CD4-positive, alpha-beta memory T cell (primary cell): ENCODE measurements at regions of chr6 and their contacts with region 1.

Region 1: DNA sequence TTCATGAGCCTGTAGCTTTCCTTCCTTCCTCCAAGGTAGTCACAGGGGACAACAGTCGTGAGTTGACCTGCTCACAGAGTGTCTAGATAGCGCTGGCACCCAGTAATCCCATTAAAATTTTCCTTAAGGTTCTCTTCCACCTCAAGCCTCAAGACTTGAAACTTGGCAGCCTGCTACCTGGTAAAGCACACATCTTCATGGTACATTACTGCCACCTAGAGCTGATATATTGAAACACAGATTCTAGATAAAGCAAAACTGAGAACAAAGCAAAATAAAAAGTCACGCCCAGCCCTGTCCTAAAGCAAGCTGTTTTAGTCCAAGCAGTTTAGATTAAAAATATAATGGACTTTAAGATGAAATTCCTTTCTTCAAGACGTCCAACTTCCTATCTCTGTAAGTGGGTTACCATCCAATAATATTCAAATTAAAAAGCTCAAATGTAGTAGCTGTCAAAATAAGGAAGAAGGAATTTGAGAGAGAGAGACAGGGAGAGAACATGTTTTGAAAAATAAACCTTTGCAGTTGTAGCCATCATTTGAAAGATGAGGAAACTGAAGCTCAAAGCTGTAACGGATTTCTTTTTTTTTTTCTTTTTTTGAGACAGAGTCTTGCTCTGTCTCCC is 50.7 kb upstream of the CD83 start:
- DNase-seq: peak in 4 of 5 donors; percentile 47 to 52 (median 50)
- H3K4me3 ChIP-seq: no peak overlapping the region
- H3K4me3 Mint-ChIP-seq: no peak overlapping the region
- H3K27ac ChIP-seq: no peak overlapping the region
- H3K27ac Mint-ChIP-seq: no peak overlapping the region
- H3K4me1 ChIP-seq: no peaks in the 10 kb centered on the region
- H3K4me1 Mint-ChIP-seq: peaks cover 0 to 5% (median 2%) of the 10 kb centered on the region in 4 donors
- H3K27me3 ChIP-seq: no peaks in the 10 kb centered on the region
- H3K27me3 Mint-ChIP-seq: peaks cover 10 to 15% of the 10 kb centered on the region in 2 donors

Region 2: GRCh38 chr6:13795041-13795750 is 271.7 kb before region 1 on chr6:
- CTCF ChIA-PET with region 1: interaction called, 44 read pairs
- POLR2A ChIA-PET with region 1: no interaction called
- intact Hi-C with region 1: loop called (anchors 1 kb)
- DNase-seq: peak; percentile 73 to 77 (median 75)
- H3K4me3 ChIP-seq: no peak overlapping the region
- H3K4me3 Mint-ChIP-seq: no peak overlapping the region
- H3K27ac ChIP-seq: no peak overlapping the region
- H3K27ac Mint-ChIP-seq: peak overlapping the region in 3 of 7 donors; percentile 7 to 32 (median 7)
- H3K4me1 ChIP-seq: no peaks in the 10 kb centered on the region
- H3K4me1 Mint-ChIP-seq: peaks cover 0 to 3% (median under 1%) of the 10 kb centered on the region in 4 donors
- H3K27me3 ChIP-seq: no peaks in the 10 kb centered on the region
- H3K27me3 Mint-ChIP-seq: no peaks in the 10 kb centered on the region

Region 3: DNA sequence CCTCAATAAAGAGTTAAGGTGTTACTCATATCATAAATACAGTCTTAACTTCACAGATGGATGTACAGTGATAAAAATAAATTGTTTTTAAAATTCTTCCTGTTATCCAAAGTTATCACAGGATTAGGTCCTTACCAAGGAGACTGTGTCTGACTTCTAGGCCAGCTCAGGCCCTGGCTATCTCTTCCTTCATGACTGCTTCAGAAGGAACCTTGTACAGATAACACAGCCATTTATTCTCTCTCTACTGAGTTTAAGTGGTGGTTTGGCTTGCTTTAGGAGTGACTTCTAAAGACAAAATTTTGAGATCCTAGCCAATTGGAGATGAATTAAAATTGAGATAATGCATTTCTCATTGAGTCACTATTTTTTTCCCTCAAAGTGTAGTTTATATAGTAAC is 182.9 kb before region 1 on chr6:
- CTCF ChIA-PET with region 1: interaction called, 13 read pairs
- POLR2A ChIA-PET with region 1: no interaction called
- intact Hi-C with region 1: no loop called
- DNase-seq: no peak
- H3K4me3 ChIP-seq: no peak overlapping the region
- H3K4me3 Mint-ChIP-seq: no peak overlapping the region
- H3K27ac ChIP-seq: no peak overlapping the region
- H3K27ac Mint-ChIP-seq: no peak overlapping the region
- H3K4me1 ChIP-seq: no peaks in the 10 kb centered on the region
- H3K4me1 Mint-ChIP-seq: no peaks in the 10 kb centered on the region
- H3K27me3 ChIP-seq: no peaks in the 10 kb centered on the region
- H3K27me3 Mint-ChIP-seq: peaks cover 0 to 3% of the 10 kb centered on the region in 2 donors

Region 4: GRCh38 chr6:13979284-13980171 is 87.4 kb before region 1 on chr6:
- CTCF ChIA-PET with region 1: no interaction called
- POLR2A ChIA-PET with region 1: no interaction called
- intact Hi-C with region 1: no loop called
- DNase-seq: no peak
- H3K4me3 ChIP-seq: no peak overlapping the region
- H3K4me3 Mint-ChIP-seq: no peak overlapping the region
- H3K27ac ChIP-seq: no peak overlapping the region
- H3K27ac Mint-ChIP-seq: no peak overlapping the region
- H3K4me1 ChIP-seq: no peaks in the 10 kb centered on the region
- H3K4me1 Mint-ChIP-seq: no peaks in the 10 kb centered on the region
- H3K27me3 ChIP-seq: no peaks in the 10 kb centered on the region
- H3K27me3 Mint-ChIP-seq: peaks cover 20 to 33% of the 10 kb centered on the region in 2 donors

Region 5: DNA sequence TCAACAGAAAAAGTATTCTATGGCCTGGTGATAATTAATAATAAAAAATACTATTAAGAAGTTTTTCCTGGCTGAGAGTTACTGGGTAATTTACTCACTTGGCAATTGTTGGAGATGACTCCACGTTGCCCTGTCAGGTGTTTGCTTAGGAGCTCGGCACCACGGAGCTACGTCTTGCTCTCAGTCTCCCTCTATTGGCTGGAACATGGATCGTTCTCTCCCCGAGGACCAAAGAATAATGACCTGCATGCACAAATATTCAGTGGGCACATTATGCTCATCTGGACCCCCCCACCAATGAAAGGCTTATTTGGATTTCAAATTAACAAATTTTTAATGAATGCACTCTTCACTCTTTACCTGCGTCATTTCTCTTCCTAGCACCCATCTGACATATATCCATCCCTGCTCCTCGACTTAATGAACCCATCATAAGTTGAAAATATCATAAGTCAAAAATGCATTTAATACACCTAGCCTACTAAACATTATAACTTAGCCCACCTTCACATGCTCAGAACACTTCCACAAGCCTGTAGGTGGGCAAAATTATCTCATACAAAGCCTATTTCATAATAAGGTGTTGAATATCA is 20.3 kb before region 1 on chr6:
- CTCF ChIA-PET with region 1: interaction called, 52 read pairs
- POLR2A ChIA-PET with region 1: no interaction called
- intact Hi-C with region 1: no loop called
- DNase-seq: peak; percentile 30 to 44 (median 37)
- H3K4me3 ChIP-seq: no peak overlapping the region
- H3K4me3 Mint-ChIP-seq: no peak overlapping the region
- H3K27ac ChIP-seq: no peak overlapping the region
- H3K27ac Mint-ChIP-seq: no peak overlapping the region
- H3K4me1 ChIP-seq: no peaks in the 10 kb centered on the region
- H3K4me1 Mint-ChIP-seq: peaks cover 0 to 1% (median 0%) of the 10 kb centered on the region in 4 donors
- H3K27me3 ChIP-seq: no peaks in the 10 kb centered on the region
- H3K27me3 Mint-ChIP-seq: peaks cover 19 to 26% of the 10 kb centered on the region in 2 donors

Region 6: GRCh38 chr6:14144678-14145113 is 77.8 kb after region 1 on chr6:
- CTCF ChIA-PET with region 1: interaction called, 14 read pairs
- POLR2A ChIA-PET with region 1: no interaction called
- intact Hi-C with region 1: no loop called
- DNase-seq: peak; percentile 59 to 69 (median 64)
- H3K4me3 ChIP-seq: no peak overlapping the region
- H3K4me3 Mint-ChIP-seq: no peak overlapping the region
- H3K27ac ChIP-seq: no peak overlapping the region
- H3K27ac Mint-ChIP-seq: no peak overlapping the region
- H3K4me1 ChIP-seq: no peaks in the 10 kb centered on the region
- H3K4me1 Mint-ChIP-seq: peaks cover 0 to 5% (median under 1%) of the 10 kb centered on the region in 4 donors
- H3K27me3 ChIP-seq: no peaks in the 10 kb centered on the region
- H3K27me3 Mint-ChIP-seq: no peaks in the 10 kb centered on the region